Posterior vena cava (tissue), 2 donors: ENCODE measurements at regions of chr12 and their contacts with region 1.

Region 1: DNA sequence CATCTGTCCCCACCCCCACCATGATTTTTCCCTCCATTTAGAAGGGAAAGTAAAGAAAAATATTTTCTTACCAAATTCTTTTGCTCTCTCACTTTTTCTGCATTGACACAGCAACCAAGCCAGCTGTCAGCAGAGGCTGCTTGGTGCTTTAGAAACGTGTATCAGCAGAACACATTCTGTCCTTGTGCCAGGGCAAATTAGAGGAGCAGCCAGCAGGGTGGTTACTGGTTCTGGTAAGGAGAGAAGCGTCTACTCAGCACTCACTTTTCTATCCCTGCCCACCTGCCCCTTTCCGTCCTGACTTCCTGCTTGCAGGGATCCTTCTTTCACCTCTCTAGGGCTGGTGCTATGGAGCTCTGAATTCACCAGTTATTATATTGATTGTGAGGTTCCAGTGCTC is 327.5 kb upstream of the PDE3A start:
- DNase-seq: no peak

Region 2: DNA sequence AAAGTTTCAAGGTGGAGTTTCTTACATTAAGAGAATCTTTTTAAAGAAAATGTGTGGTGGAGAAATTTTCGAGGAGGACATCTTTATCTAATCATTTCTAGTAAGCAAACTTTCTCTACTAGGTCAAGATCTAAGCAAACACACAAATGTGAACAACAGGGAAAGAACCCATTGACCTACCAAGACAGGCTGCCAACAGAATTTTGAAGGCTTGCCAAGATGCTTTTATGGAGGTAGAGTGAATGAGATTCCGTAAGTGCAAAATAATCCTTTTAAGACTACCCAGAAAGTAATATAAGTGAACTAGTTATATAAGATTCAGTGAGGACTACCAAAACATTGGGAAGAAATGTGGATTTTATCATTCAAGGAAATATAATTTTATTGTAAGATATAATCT is 29.6 kb before region 1 on chr12:
- intact Hi-C with region 1: loop called in 1 of 2 experiments (anchors 2 kb)
- DNase-seq: no peak